IMR-90 (cell line): ENCODE measurements at regions of chr3 and their contacts with region 1.

Region 1: GRCh38 chr3:39406368-39407258 is at the start of gene RPSA:
- DNase-seq: peak; percentile 96
- ATAC-seq: peak; percentile 96
- H3K4me3 ChIP-seq: peak within 1 kb of the TSS; percentile 55
- H3K27ac ChIP-seq: peak within 1 kb of the TSS; percentile 74
- H3K4me1 ChIP-seq: peaks cover 2% of the 10 kb centered on the region; the same call in 1 of the 2 replicates
- H3K27me3 ChIP-seq: no peaks in the 10 kb centered on the region
- CTCF ChIP-seq: peak; percentile 31
- POLR2A ChIP-seq: peak; percentile 99
- RAD21 ChIP-seq: peak; percentile 20; the same call in 1 of the 2 replicates
- total RNA-seq, gene RPSA: 1,415 and 1,531 TPM in 2 replicates

Region 2: DNA sequence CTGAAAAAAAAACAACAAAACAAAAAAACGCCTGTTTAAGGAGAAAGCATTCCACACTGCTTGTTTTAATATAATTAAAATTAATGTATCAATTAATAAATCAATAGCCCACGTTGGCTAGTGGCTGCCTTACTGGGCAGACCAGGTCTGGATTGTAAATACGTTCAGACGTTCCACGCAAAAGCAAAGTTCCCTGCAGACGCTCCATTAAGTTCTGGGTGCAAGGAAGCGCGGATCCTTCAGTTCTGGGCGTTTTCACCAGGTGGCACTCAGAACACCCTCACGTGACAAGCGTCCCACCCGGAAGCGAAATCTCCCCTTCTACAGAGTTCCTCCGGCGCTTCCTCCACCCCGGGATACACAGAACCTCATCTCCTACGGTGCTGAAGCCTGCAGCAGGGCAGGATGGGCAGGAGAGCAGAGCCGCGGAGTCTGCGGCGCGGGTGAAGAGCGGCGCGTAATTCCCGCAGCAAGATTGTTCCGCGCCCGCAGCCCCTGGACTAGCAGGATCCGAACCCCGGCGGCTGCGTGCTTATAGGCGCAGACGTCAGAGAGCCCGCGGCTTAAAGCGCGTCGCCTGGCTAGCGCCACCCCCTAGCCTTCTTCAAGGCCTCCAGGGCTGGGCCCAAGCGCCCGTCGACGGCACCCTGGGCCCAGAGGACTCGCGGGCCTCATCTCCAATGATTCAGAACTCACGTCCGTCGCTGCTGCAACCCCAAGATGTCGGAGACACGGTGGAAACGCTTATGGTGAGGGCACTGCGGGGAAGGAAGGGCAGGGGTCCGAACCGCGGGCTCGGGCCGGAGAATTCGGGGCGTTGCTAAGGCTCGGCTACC is 23.4 kb before region 1 on chr3 and contains the start of gene SLC25A38:
- CTCF ChIA-PET with region 1: no interaction called
- POLR2A ChIA-PET with region 1: no interaction called
- dilution Hi-C with region 1: no loop called
- in situ Hi-C with region 1: no loop called
- intact Hi-C with region 1: loop called (anchors 1 kb)
- DNase-seq: peak; percentile 85
- ATAC-seq: peak; percentile 85
- H3K4me3 ChIP-seq: peak within 1 kb of the TSS; percentile 97
- H3K27ac ChIP-seq: peak within 1 kb of the TSS; percentile 83
- H3K4me1 ChIP-seq: peaks cover 5% of the 10 kb centered on the region; the same call in 1 of the 2 replicates
- H3K27me3 ChIP-seq: no peaks in the 10 kb centered on the region
- CTCF ChIP-seq: peak; percentile 30; the same call in 1 of the 2 replicates
- POLR2A ChIP-seq: peak; percentile 66
- RAD21 ChIP-seq: no peak
- total RNA-seq, gene SLC25A38: 16.1 and 17.4 TPM in 2 replicates

Region 3: DNA sequence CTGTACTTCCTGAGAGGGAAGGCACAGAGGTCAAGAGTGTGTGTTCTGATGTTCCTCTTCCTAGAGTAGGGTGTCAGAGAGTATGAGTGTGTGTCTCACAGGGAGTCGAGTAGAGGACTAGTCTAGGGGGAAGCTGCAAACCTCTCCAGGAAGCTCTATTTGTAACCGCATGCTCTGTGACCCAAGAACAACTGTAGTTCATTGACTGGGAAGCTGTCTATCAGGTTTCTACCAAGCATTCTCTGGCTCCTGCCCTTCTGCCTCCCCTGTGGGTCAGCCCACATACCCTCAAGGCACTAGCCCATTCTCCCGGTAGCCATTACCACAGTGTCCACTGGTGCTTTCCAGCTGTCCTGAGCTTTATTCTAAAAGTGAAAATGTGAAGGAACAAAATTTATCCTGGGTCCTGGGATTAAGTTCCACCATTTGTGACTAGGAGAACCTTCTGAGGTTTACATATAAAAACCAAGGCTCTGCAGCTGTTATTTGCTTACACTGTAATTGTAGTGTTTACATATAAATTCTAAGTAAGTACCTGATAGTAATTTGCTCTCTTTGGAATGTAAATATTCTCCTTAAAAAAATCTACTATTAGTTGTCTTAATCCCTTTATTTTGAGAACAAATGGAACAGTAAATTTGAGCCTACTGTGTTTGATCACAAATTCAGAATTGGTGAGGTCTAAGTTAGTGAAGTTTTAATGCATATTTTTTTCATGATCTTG is 443.5 kb after region 1 on chr3:
- CTCF ChIA-PET with region 1: no interaction called
- POLR2A ChIA-PET with region 1: no interaction called
- dilution Hi-C with region 1: no loop called
- in situ Hi-C with region 1: no loop called
- intact Hi-C with region 1: no loop called
- DNase-seq: no peak
- ATAC-seq: no peak
- H3K4me3 ChIP-seq: no peak overlapping the region
- H3K27ac ChIP-seq: no peak overlapping the region
- H3K4me1 ChIP-seq: no peaks in the 10 kb centered on the region
- H3K27me3 ChIP-seq: no peaks in the 10 kb centered on the region
- CTCF ChIP-seq: no peak
- POLR2A ChIP-seq: no peak
- RAD21 ChIP-seq: no peak